ENCODE measurements at regions of chr10 and their contacts with region 1.

Region 1: GRCh38 chr10:126369125-126369710 is 19.1 kb downstream of the ADAM12 start:
- DNase-seq: no peak
- ATAC-seq: no peak
- H3K4me3 ChIP-seq: no peak overlapping the region
- H3K27ac ChIP-seq: no peak overlapping the region
- H3K4me1 ChIP-seq: peaks cover 5% of the 10 kb centered on the region
- H3K27me3 ChIP-seq: no peaks in the 10 kb centered on the region
- CTCF ChIP-seq: no peak
- POLR2A ChIP-seq: no peak
- RAD21 ChIP-seq: no peak

Region 2: DNA sequence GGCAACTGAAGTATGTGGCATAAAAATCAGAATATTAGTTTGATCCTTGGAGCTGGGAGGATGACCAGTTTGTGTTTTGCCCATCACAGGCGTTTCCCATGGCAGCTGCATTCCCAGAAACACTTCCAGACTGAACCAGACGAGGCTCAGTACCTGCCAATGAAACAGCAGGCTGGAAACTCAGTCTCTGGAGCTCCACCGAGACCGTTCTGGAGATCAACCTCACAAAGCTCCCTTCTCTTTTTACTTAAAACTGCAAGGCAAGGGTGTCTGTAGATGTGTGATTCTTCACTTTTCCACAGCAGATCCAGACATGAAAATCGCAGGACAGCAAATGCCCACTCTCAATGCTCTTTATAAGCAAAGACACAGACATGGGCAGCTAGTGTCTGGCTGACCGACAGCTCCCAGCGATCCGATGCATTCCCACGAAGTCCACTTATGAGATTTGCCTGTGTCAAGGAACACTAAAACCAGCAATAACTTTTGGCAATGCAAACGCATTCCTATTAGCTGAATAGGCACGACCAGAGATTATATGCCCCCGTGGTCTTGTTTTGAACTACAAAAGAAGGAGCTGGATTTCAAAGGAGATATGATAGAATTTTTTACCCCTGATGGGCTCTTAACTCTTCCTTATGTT is 53.6 kb before region 1 on chr10:
- CTCF ChIA-PET with region 1: no interaction called
- POLR2A ChIA-PET with region 1: no interaction called
- dilution Hi-C with region 1: no loop called
- in situ Hi-C with region 1: no loop called
- intact Hi-C with region 1: loop called (anchors 5 kb)
- DNase-seq: peak; percentile 83
- ATAC-seq: peak; percentile 74
- H3K4me3 ChIP-seq: no peak overlapping the region
- H3K27ac ChIP-seq: no peak overlapping the region
- H3K4me1 ChIP-seq: peaks cover 9% of the 10 kb centered on the region
- H3K27me3 ChIP-seq: no peaks in the 10 kb centered on the region
- CTCF ChIP-seq: no peak
- POLR2A ChIP-seq: no peak
- RAD21 ChIP-seq: no peak

Region 3: DNA sequence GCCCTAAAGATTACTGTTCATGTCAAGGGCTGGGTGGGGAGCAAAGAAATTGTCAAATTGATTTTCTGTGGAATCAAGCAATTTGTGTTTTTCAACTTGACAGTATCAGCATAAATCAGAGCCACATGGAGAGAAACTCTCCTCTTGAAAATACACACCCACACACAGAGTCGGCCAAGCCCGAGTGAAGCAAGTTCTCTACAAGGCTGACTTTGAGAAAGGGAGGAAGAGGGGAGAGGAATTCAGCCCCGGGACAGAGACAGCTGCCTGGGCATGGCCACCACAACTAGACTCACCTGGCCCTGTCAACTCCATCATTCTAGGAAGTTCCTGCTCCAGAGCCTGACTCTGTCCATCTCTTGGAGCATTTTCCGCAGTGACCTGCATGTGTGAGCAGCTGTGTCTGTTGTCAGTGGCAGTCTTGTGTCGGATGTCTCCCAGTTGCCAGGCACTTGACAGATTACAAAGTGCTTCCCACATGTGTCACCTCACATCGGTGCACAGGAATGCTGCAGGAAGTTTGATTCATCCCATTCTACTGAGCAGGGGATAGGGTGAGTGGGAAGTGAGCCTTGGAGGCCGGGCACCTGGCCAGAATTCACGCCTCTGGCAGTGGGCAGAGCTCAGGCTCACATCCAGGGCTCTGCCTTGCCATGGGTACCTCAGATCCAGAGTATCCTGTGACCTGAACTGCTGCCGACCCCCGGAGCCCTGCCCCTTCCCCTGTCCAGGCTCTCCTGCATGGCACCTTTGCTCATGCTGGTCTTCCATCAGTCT is 18.8 kb before region 1 on chr10:
- CTCF ChIA-PET with region 1: no interaction called
- POLR2A ChIA-PET with region 1: no interaction called
- dilution Hi-C with region 1: no loop called
- in situ Hi-C with region 1: no loop called
- intact Hi-C with region 1: no loop called
- DNase-seq: peak; percentile 90
- ATAC-seq: peak; percentile 81
- H3K4me3 ChIP-seq: no peak overlapping the region
- H3K27ac ChIP-seq: no peak overlapping the region; the same call in 1 of the 2 replicates
- H3K4me1 ChIP-seq: peaks cover 9% of the 10 kb centered on the region
- H3K27me3 ChIP-seq: no peaks in the 10 kb centered on the region
- CTCF ChIP-seq: no peak
- POLR2A ChIP-seq: 0 out of 2 replicates have a peak, but pooled peaks have one; percentile 28
- RAD21 ChIP-seq: no peak

Measured in IMR-90 (cell line).